Endothelial cell of umbilical vein (primary cell): ENCODE measurements at regions of chr7 and their contacts with region 1.

Region 1: DNA sequence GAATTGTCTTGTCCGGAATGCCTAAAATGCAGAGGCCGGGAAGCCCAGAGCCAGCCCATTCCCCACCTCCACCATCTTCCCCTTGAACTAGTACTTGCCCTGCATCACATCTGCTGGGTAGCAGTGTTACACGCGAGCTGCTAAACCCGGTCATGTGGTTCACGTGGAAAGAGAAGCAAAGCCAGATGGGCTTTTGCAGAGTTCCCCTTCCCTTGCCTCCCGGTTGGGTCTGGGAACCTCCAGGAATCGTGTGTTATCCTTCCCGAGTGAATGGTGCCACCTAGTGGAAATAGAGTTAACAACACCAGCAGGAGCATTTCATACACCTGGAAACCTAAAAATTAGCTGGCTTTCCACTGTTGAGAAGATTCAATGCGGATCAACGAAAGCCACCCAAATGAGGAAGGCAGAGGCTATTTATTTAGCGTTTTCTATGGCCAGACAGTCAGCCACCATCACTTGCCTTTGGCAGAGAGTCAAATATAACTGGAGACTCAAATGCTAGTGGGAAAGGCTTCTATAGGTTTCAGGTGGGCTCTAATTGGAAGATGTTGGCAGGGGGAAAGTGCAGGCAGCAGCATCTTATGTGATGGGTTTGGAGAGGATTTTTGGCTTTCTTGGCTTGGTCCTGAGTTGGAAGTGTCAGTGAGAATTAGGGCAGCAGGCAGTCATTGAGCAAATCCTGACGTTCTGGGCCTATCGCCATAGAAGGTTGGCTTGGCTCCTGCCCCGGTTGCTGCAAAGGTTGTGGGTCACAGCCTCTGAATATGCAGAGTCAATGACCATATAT is 12.9 kb upstream of the DENND2A start:
- DNase-seq: peak; percentile 62
- H3K4me3 ChIP-seq: no peak overlapping the region
- H3K27ac ChIP-seq: no peak overlapping the region
- H3K4me1 ChIP-seq: peaks cover 8% of the 10 kb centered on the region
- H3K27me3 ChIP-seq: no peaks in the 10 kb centered on the region
- CTCF ChIP-seq: peak; percentile 65 to 74
- POLR2A ChIP-seq: no peak

Region 2: GRCh38 chr7:140342727-140343514 is 310.6 kb before region 1 on chr7:
- CTCF ChIA-PET with region 1: no interaction called
- POLR2A ChIA-PET with region 1: no interaction called
- dilution Hi-C with region 1: no loop called
- intact Hi-C with region 1: loop called (anchors 10 kb)
- DNase-seq: peak; percentile 31
- H3K4me3 ChIP-seq: no peak overlapping the region
- H3K27ac ChIP-seq: no peak overlapping the region
- H3K4me1 ChIP-seq: peaks cover 6% of the 10 kb centered on the region
- H3K27me3 ChIP-seq: no peaks in the 10 kb centered on the region
- CTCF ChIP-seq: peak; percentile 40 to 60
- POLR2A ChIP-seq: no peak